ENCODE measurements at regions of chr1 and their contacts with region 1.

Region 1: GRCh38 chr1:212558693-212559480 is 49.7 kb upstream of the ATF3 start:
- DNase-seq: peak; percentile 99
- ATAC-seq: peak; percentile 69
- H3K4me3 ChIP-seq: peak overlapping the region; percentile 76
- H3K27ac ChIP-seq: peak overlapping the region; percentile 66
- H3K4me1 ChIP-seq: peaks cover 37% of the 10 kb centered on the region
- H3K27me3 ChIP-seq: no peaks in the 10 kb centered on the region
- CTCF ChIP-seq: peak; percentile 35; the same call in 1 of the 2 replicates

Region 2: GRCh38 chr1:212488397-212489283 is 70.2 kb before region 1 on chr1:
- CTCF ChIA-PET with region 1: no interaction called
- POLR2A ChIA-PET with region 1: interaction called, 7 read pairs
- intact Hi-C with region 1: loop called (anchors 1 kb)
- DNase-seq: peak; percentile 76
- ATAC-seq: no peak; the same call in 1 of the 2 replicates
- H3K4me3 ChIP-seq: no peak overlapping the region
- H3K27ac ChIP-seq: peak overlapping the region; percentile 92
- H3K4me1 ChIP-seq: peaks cover 49% of the 10 kb centered on the region
- H3K27me3 ChIP-seq: no peaks in the 10 kb centered on the region
- CTCF ChIP-seq: no peak

Region 3: DNA sequence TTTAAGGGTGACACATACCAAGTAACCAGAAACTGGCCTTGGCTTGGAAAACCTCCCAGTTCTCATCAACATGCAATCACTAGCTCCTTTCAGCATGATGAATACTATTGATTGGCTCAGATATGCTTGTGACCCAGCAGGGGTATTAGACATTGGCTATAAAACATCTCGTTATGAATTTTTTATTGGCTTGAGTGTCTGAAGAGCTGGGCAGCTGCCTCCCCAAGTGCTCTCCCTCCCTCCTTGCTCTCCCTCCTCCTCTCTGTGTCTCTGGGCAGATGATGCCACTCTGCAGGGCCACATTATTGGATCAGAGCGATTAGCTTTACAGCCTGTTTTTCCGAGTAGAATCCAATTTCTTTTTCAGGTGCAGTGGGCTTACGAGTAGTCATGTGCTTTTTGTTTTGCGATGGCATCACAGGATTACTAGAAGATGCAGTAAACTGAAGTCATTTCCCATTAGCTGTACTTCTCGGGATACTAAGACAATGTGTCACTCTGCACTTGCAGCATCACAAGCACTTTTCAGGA is 29.6 kb before region 1 on chr1:
- CTCF ChIA-PET with region 1: no interaction called
- POLR2A ChIA-PET with region 1: interaction called, 10 read pairs
- intact Hi-C with region 1: no loop called
- DNase-seq: peak; percentile 70
- ATAC-seq: peak; percentile 57
- H3K4me3 ChIP-seq: no peak overlapping the region
- H3K27ac ChIP-seq: no peak overlapping the region
- H3K4me1 ChIP-seq: peaks cover 16% of the 10 kb centered on the region
- H3K27me3 ChIP-seq: no peaks in the 10 kb centered on the region
- CTCF ChIP-seq: no peak